ENCODE measurements at regions of chr22 and their contacts with region 1.

Region 1: DNA sequence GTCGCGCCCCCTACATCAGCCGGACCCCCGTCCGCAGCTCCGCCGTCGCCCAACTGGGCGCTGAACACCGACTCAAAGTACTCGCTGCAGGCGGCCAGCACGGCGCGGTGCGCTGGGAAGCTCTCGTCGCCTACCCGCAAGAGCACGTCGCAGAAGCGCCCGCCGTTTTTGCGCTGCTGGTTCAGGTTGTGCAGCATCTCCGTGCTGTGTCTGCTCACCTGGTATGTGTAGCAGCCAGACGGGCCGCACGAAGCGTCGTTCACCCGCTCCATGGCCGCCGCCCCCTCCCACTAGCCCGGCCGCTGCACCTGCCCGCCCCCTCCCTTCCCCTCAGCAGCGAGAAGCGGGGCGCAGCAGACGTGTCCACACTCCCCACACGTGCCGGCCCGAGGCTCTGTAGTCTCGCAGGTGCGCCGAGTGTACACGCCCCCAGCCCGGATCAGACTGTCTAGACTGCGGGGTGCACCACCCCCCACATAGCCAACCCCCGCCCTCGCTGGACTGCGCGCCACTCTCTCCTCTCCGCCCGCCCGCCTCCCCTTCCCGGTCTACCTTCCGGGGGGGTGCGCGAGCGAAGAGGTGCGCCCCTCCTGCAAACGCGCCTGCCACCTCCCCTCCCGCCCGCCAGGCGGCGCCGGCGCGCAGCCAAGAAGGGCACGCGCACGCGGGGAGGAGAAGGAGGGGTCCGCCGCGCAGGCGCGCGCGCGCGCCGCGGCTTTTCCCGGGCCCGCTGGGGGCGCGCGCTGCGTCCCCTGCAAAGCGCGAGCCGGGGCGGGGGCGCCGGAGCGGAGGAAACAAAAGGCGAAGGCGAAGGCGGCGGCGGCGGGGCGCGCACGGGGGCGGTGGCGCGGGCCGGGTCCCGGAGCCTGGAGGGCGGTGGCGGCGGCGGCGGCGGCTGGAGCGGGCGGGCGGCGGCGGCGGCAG is 553 bp downstream of the PATZ1 start:
- DNase-seq: peak; percentile 47 to 78
- ATAC-seq: peak; percentile 79 to 83
- H3K4me3 ChIP-seq: peak overlapping the region; percentile 79 to 98 (median 83)
- H3K27ac ChIP-seq: peak overlapping the region; percentile 80 to 86 (median 83)
- H3K4me1 ChIP-seq: peaks cover 24 to 42% of the 10 kb centered on the region in 2 donors
- H3K27me3 ChIP-seq: no peaks in the 10 kb centered on the region
- CTCF ChIP-seq: peak; percentile 76 to 97 (median 94)
- POLR2A ChIP-seq: peak; percentile 30 to 36

Region 2: DNA sequence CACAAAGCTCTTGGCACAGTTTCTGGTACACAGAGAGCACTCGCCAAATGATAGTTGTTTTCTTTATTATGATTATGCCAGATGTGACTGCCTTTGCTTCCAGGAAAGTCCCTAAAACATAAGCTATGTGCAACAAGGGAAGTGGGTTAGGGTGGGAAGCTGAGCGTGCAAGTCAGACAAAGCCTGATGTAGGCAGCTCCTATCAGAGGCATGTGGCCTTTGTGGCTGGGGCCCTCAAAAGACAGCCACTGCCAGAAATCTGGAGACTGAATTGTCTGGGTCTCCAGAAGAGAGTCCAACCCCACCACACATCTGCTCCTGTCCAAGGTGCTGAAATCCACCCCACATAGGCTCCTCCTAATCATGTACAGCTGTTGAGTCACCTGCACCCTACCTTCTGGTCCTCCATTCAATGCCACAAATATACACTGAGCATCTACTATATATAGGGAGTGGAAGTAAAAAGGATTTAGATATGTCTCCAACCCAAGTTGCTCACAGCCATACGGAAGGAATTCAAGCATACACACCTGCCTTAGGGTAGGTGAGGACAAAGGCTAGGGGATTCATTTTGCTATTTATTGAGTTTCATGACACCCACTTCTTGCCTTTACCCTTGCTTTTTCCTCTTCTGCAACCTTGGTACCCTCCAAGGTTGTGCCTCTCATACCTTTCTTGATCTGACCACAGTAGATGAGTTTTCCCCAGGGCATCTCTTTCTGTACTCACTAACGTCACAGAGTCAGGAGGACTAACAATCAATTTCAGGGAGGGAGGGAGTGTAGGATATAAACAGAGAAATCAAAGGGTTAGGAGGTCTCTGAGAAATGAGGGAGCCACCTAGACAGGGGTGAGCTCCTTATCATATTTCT is 886.2 kb before region 1 on chr22:
- in situ Hi-C with region 1: no loop called
- intact Hi-C with region 1: no loop called
- DNase-seq: no peak
- ATAC-seq: no peak
- H3K4me3 ChIP-seq: no peak overlapping the region
- H3K27ac ChIP-seq: no peak overlapping the region
- H3K4me1 ChIP-seq: no peaks in the 10 kb centered on the region
- H3K27me3 ChIP-seq: peaks cover 0 to 3% (median 0%) of the 10 kb centered on the region in 3 donors
- CTCF ChIP-seq: no peak
- POLR2A ChIP-seq: no peak

Region 3: GRCh38 chr22:31107178-31107893 is 238.3 kb before region 1 on chr22 and contains the start of gene SELENOM:
- in situ Hi-C with region 1: no loop called
- intact Hi-C with region 1: no loop called
- DNase-seq: peak; percentile 96 to 97
- ATAC-seq: peak; percentile 92 to 94
- H3K4me3 ChIP-seq: peak within 1 kb of the TSS; percentile 68 to 81 (median 80)
- H3K27ac ChIP-seq: peak within 1 kb of the TSS; percentile 93 to 98 (median 96)
- H3K4me1 ChIP-seq: peaks cover 22 to 30% of the 10 kb centered on the region in 2 donors
- H3K27me3 ChIP-seq: no peaks in the 10 kb centered on the region
- CTCF ChIP-seq: peak; percentile 89 to 97 (median 94)
- POLR2A ChIP-seq: peak; percentile 85 to 87
- total RNA-seq, gene SELENOM: 144 to 184 (median 157) TPM

Region 4: GRCh38 chr22:31399211-31400028 is 53.8 kb after region 1 on chr22 and contains the start of gene DRG1:
- in situ Hi-C with region 1: loop called in 1 of 4 experiments (anchors 5 kb)
- intact Hi-C with region 1: loop called (anchors 1 kb)
- DNase-seq: peak; percentile 96 to 97
- ATAC-seq: peak; percentile 96
- H3K4me3 ChIP-seq: peak within 1 kb of the TSS; percentile 70 to 90 (median 80)
- H3K27ac ChIP-seq: peak within 1 kb of the TSS; percentile 87 to 93 (median 91)
- H3K4me1 ChIP-seq: peaks cover 15 to 18% of the 10 kb centered on the region in 2 donors
- H3K27me3 ChIP-seq: no peaks in the 10 kb centered on the region
- CTCF ChIP-seq: peak in 3 of 5 experiments; percentile 12 to 21 (median 21)
- POLR2A ChIP-seq: peak; percentile 93 to 95
- total RNA-seq, gene DRG1: 117 to 136 (median 127) TPM

Region 5: DNA sequence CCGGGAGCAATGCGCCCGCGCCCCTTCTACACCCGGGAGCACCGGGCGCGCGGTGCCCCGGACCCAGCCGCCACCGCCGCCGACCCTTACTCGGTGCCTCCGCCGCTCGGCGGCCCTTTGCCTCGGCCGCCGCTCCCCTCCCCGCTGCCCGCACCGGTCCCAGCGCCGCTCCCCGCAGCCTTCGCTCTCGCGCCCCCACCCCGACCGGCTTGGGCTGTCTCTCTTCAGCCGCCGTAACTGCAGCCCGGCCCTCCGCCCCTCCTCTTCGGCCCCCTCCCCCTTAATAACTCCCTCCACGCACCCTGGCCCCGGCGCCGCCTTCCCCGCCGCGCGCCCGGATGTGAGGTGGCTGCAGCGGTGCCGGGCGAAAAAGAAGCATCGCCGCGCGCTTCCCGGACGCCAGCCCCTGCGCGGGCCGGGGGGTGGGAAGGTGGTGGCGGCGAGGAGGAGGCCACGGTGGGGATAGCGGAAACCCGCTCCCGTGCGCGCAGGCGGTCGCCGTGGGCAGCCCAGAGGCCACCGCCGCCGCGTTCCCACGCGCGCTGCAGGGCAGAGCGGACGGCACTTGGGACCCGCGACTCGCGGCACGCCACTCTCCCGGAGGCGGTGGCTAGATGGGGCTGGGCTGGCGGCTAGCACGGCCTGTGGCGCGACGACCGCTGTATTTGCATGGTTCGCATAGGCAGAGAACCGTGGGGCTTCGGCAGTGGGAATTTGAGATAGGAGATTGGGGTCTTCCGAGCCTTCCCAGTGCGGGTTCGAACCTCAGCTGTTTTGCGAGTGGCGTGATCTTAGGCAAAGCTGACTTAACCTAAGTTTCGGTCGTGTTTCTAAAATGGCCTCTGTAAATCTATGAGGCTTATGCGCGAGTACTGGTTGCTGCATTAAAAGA is 144.3 kb after region 1 on chr22 and contains the start of gene EIF4ENIF1:
- in situ Hi-C with region 1: no loop called
- intact Hi-C with region 1: loop called (anchors 5 kb)
- DNase-seq: peak; percentile 81 to 84
- ATAC-seq: peak; percentile 84 to 91
- H3K4me3 ChIP-seq: peak within 1 kb of the TSS; percentile 61 to 83 (median 78)
- H3K27ac ChIP-seq: peak within 1 kb of the TSS; percentile 86 to 99 (median 94)
- H3K4me1 ChIP-seq: peaks cover 22 to 31% of the 10 kb centered on the region in 2 donors
- H3K27me3 ChIP-seq: no peaks in the 10 kb centered on the region
- CTCF ChIP-seq: peak in 2 of 5 experiments; percentile 16 to 25
- POLR2A ChIP-seq: peak; percentile 71 to 75
- total RNA-seq, gene EIF4ENIF1: 10.1 to 19.6 (median 15.1) TPM

Region 6: DNA sequence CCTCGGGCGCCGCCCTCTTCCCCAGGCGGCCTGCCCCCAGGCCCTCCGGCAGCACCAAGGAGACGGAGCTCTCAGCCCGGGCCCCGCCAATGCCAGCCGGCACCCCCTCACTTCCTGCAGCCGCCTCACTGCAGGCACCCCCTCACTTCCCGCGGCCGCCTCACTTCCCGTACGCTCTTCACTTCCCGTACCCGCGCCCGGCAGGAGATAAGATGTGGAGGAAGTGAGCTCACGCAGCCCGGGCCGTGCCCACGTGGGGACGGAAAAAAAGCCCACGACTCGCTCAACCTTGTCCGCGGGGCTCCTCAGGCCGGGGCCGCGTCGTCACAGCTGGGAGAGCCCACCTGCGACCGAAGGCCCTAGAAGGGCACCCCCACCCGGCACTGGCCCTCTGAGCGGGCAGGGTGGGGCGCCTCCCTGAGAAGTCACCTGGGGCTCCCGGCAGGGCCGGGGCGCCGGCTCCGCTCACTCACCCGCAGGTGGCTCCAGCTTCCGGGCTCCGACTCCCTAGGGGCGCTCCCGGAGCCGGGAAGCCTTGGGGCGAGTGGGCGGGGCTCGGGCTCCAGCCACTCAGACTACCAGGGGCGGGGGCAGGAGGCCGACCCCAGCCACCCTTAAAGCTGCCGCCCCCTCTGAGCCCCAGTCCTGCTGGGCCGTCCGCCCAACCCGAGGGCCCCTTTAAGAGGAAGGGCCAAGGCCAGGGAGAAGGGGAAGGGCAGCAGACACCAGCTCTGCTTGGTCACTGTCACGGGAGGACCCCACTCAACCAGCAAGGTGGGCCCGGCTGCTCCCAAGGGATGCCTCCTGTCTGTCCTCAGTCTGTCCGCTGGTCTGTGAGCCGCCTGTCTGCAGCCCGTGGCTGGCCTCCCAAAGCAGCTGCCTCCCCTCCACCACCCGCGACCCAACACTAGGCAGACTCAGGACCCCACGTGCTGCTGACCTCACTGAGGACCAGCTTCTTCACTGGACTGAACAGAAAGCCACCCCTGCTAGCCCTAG is 285.0 kb after region 1 on chr22:
- in situ Hi-C with region 1: loop called in 2 of 4 experiments (anchors 25 kb)
- intact Hi-C with region 1: loop called (anchors 5 kb)
- DNase-seq: peak; percentile 31 to 52
- ATAC-seq: peak; percentile 43 to 53
- H3K4me3 ChIP-seq: peak overlapping the region; percentile 75 to 82 (median 78)
- H3K27ac ChIP-seq: peak overlapping the region; percentile 67 to 84 (median 79)
- H3K4me1 ChIP-seq: peaks cover 50 to 55% of the 10 kb centered on the region in 2 donors
- H3K27me3 ChIP-seq: no peaks in the 10 kb centered on the region
- CTCF ChIP-seq: no peak
- POLR2A ChIP-seq: peak; percentile 12 to 41

Measured in gastrocnemius medialis (tissue), 4 donors.